Kidney (tissue), 22 donors: ENCODE measurements at regions of chr16 and their contacts with region 1.

Region 1: GRCh38 chr16:58025351-58026138 is at the start of gene MMP15:
- DNase-seq: peak; percentile 91 to 97 (median 93)
- H3K4me3 ChIP-seq: peak within 1 kb of the TSS; percentile 21 to 68 (median 51)
- H3K27ac ChIP-seq: peak within 1 kb of the TSS; percentile 74 to 80
- H3K4me1 ChIP-seq: peaks cover 3 to 24% (median 15%) of the 10 kb centered on the region in 3 donors
- H3K27me3 ChIP-seq: no peaks in the 10 kb centered on the region
- CTCF ChIP-seq: no peak
- total RNA-seq, gene MMP15: 31.4 TPM

Region 2: DNA sequence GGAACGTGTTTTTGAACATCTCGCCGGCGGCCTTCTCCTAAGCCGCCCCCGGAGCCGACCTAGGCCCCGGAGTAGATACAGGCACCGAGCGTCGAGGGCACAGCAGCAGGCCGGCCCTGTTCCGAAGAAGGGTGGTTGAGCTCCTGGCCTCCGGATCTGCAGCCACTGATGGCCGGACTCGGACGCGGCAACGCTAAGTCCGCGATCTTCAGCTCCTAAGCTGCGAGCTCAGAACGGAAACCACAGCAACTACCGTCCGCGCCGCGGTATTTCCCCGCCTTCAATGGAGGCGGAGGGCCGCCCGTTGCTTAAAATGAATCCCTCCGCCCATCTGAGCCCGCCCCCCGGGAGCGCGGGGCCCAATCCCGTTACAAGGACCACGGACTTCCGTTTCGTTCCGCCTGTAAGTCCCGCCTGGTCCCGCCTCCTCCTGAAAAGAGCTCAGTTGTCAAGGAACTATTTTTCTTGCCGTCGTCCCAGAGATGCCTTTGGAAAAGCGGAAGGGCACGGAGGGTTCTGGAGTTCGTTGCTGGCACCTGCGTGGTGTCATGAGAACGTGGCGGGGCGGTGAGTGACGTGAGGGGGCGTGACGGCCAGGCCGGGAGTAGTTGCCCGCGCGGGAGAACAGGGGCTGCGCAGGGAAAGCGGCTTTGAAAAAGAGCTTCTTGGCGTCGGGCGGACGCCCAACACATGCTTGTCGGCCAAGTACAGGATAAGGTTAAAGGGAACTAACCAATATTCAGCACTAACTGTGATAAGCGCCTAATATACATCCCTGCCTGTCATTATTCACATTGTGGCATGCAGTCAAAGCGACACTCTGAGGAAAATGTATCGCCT is 103.8 kb after region 1 on chr16 and contains the start of gene CFAP20:
- intact Hi-C with region 1: loop called (anchors 10 kb)
- DNase-seq: peak; percentile 99 to 100 (median 99)
- H3K4me3 ChIP-seq: peak within 1 kb of the TSS; percentile 75 to 88 (median 87)
- H3K27ac ChIP-seq: peak within 1 kb of the TSS; percentile 82 to 85
- H3K4me1 ChIP-seq: peaks cover 3 to 28% (median 19%) of the 10 kb centered on the region in 3 donors
- H3K27me3 ChIP-seq: no peaks in the 10 kb centered on the region
- CTCF ChIP-seq: peak; percentile 4
- total RNA-seq, gene CFAP20: 22.3 TPM

Region 3: GRCh38 chr16:58299757-58300349 is 274.3 kb after region 1 on chr16:
- intact Hi-C with region 1: no loop called
- DNase-seq: no peak
- H3K4me3 ChIP-seq: no peak overlapping the region
- H3K27ac ChIP-seq: no peak overlapping the region
- H3K4me1 ChIP-seq: no peaks in the 10 kb centered on the region
- H3K27me3 ChIP-seq: no peaks in the 10 kb centered on the region
- CTCF ChIP-seq: no peak

Region 4: GRCh38 chr16:59047114-59047513 is 1021.6 kb after region 1 on chr16:
- intact Hi-C with region 1: no loop called
- DNase-seq: no peak
- H3K4me3 ChIP-seq: no peak overlapping the region
- H3K27ac ChIP-seq: no peak overlapping the region
- H3K4me1 ChIP-seq: no peaks in the 10 kb centered on the region
- H3K27me3 ChIP-seq: no peaks in the 10 kb centered on the region
- CTCF ChIP-seq: no peak